Left cardiac atrium (tissue), 4 donors: ENCODE measurements at regions of chr10 and their contacts with region 1.

Region 1: DNA sequence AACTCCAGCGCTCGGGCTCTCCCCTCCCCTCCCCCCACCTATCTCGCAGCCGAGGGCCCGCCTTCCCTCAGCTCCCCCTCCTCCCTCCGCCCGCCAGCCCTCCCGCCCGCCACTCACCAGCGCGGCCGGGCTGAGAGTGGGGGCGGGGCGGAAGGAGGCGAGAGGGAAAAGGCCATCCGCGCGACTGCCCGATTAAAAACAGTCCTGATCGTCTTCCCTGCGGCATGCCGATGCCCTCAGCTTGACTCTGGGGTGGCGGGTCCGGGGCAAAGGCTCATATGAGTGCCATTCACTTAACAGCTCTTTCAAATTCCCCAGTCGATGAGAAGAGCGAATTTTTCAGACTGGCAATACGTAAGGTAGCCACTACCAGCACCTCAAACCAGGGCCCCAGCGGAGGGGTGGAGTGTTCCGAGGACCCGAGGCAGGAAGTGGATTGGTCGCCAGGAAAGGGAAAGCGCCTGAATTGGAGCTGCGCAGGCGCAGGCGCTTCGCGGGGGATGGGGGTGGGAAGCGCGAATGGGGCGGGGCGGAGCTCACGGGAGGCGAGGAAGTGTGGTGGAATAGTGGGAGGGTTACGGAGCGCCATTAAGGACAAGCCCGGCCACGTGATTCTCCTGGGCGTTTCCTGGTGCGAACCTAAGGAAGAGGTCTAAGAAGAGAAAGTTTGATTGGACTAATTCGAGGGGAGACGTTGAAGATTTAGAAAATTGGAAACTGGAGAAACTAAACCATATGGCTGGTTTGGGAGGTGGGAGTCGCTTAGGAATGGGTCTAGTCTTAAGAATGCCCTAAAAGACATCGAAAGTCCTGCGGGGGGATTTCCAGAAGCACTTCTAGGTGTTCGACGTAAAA is at the start of gene UPF2:
- DNase-seq: peak; percentile 97
- ATAC-seq: peak; percentile 96 to 97
- total RNA-seq, gene UPF2: 13.7 to 16.9 TPM

Region 2: GRCh38 chr10:12068449-12069269 is 25.6 kb after region 1 on chr10 and contains the start of gene DHTKD1:
- intact Hi-C with region 1: loop called in 1 of 2 experiments (anchors 2 kb)
- DNase-seq: peak; percentile 98
- ATAC-seq: peak; percentile 100
- total RNA-seq, gene DHTKD1: 14.2 to 18.2 TPM